ENCODE measurements at regions of chr4 and their contacts with region 1.

Region 1: DNA sequence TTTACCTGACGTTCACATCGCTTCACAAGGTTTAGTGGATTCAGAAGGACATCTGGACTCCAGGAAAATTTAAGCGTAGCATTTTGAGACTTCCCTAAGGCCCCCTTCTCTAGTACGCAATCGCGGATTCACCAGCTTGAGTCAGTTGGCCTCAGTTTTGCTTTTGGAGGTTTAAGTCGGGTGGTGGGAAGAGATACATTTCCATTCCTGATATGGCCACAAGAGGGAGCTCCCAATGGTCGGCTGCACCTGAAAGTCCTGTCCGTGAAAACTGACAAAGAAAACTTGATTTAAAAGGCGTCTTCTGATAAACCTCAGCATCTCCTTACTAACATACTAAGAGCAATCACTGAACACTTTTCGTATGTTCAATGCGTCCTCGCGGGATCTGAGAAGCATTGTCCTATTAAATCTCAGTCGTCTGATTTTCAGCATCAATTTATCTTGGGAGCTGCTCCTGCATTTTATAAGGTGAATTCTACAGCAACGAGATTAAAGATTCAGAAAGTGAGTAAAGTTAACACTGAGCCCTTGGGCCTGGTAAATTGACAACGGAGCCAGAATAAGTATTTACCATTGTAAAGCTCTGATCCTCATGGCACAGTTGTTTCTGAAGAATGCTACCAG is 50.6 kb downstream of the LGI2 start:
- DNase-seq: peak; percentile 44 to 70
- H3K4me3 ChIP-seq: no peak overlapping the region
- H3K4me3 Mint-ChIP-seq: no peak overlapping the region
- H3K27ac Mint-ChIP-seq: no peak overlapping the region
- H3K4me1 ChIP-seq: no peaks in the 10 kb centered on the region
- H3K4me1 Mint-ChIP-seq: no peaks in the 10 kb centered on the region
- H3K27me3 ChIP-seq: no peaks in the 10 kb centered on the region; the same call in 1 of the 2 replicates
- H3K27me3 Mint-ChIP-seq: peaks cover 4% of the 10 kb centered on the region
- CTCF ChIP-seq: peak; percentile 78 to 81

Region 2: GRCh38 chr4:25065475-25065874 is 85.3 kb after region 1 on chr4:
- CTCF ChIA-PET with region 1: no interaction called
- POLR2A ChIA-PET with region 1: no interaction called
- intact Hi-C with region 1: loop called (anchors 5 kb)
- DNase-seq: no peak
- H3K4me3 ChIP-seq: no peak overlapping the region
- H3K4me3 Mint-ChIP-seq: no peak overlapping the region
- H3K27ac Mint-ChIP-seq: no peak overlapping the region
- H3K4me1 ChIP-seq: peaks cover 20% of the 10 kb centered on the region
- H3K4me1 Mint-ChIP-seq: peaks cover 10% of the 10 kb centered on the region
- H3K27me3 ChIP-seq: no peaks in the 10 kb centered on the region
- H3K27me3 Mint-ChIP-seq: no peaks in the 10 kb centered on the region
- CTCF ChIP-seq: no peak

Region 3: DNA sequence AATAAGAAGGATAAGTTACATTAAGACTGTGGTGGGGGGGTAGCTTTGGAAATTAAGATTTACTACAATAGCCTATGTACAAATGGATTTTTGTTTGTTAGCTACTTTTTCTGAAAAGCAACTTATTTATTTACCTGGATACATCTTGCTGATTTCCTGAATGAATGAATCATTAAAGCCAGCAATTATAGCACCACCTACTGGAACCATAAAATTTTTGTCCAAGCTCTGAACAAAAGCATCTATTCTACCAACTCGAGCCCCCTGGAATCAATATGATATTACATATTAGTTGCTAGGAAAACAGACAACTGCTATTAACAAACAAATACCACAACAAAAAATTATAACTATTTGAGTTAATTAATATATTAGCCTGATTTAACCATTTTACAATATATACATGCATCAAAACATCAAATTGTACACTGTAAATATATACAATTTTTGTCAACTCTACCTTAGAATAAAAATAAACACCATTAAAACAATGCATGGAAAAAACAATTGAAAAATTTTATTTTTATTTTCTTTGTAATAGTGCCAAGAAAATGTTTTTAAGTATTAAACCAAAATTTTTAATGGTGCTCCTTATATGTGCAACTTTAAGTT is 164.8 kb after region 1 on chr4:
- CTCF ChIA-PET with region 1: interaction called, 7 read pairs
- POLR2A ChIA-PET with region 1: no interaction called
- intact Hi-C with region 1: loop called (anchors 1 kb)
- DNase-seq: peak in 1 of 2 experiments; percentile 35
- H3K4me3 ChIP-seq: no peak overlapping the region
- H3K4me3 Mint-ChIP-seq: no peak overlapping the region
- H3K27ac Mint-ChIP-seq: no peak overlapping the region
- H3K4me1 ChIP-seq: no peaks in the 10 kb centered on the region
- H3K4me1 Mint-ChIP-seq: no peaks in the 10 kb centered on the region
- H3K27me3 ChIP-seq: no peaks in the 10 kb centered on the region
- H3K27me3 Mint-ChIP-seq: no peaks in the 10 kb centered on the region
- CTCF ChIP-seq: peak; percentile 51 to 53

Region 4: DNA sequence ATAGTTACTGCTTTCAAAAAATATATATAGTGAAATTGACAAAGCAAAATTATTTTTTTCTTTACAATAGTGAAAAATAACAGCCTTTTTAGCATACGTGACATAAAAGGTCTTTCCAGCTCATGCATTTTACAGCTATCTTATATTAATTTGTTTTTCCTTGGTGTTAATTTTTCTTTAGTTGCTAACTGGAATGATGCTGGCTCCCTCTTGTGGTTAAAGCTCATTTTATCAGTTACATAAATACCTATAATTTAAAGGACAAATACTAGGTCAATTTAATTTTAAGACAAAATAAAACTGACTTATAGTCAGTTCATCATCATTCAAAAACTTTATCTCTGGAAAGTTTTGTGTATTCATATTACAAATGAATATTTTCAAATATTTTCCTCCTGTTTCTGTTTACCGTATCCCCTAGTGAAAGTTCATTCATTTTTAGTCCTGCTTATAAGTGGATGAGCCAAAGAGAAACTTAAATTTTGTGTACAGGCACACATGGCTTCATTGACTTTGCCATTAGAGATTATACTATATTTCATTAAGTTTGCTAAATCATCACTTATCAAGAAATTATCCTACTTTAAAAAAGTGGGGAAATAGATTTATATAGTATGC is 386.9 kb after region 1 on chr4:
- CTCF ChIA-PET with region 1: interaction called, 13 read pairs
- POLR2A ChIA-PET with region 1: no interaction called
- intact Hi-C with region 1: loop called (anchors 2 kb)
- DNase-seq: peak in 1 of 2 experiments; percentile 24
- H3K4me3 ChIP-seq: no peak overlapping the region
- H3K4me3 Mint-ChIP-seq: no peak overlapping the region
- H3K27ac Mint-ChIP-seq: no peak overlapping the region
- H3K4me1 ChIP-seq: peaks cover 15% of the 10 kb centered on the region
- H3K4me1 Mint-ChIP-seq: no peaks in the 10 kb centered on the region
- H3K27me3 ChIP-seq: no peaks in the 10 kb centered on the region
- H3K27me3 Mint-ChIP-seq: no peaks in the 10 kb centered on the region
- CTCF ChIP-seq: peak; percentile 34 to 36

Measured in Caco-2 (cell line).